Activated CD4-positive, alpha-beta T cell treated with anti-CD3 and anti-CD28 coated beads for 36 hours (primary cell): ENCODE measurements at regions of chr16 and their contacts with region 1.

Region 1: DNA sequence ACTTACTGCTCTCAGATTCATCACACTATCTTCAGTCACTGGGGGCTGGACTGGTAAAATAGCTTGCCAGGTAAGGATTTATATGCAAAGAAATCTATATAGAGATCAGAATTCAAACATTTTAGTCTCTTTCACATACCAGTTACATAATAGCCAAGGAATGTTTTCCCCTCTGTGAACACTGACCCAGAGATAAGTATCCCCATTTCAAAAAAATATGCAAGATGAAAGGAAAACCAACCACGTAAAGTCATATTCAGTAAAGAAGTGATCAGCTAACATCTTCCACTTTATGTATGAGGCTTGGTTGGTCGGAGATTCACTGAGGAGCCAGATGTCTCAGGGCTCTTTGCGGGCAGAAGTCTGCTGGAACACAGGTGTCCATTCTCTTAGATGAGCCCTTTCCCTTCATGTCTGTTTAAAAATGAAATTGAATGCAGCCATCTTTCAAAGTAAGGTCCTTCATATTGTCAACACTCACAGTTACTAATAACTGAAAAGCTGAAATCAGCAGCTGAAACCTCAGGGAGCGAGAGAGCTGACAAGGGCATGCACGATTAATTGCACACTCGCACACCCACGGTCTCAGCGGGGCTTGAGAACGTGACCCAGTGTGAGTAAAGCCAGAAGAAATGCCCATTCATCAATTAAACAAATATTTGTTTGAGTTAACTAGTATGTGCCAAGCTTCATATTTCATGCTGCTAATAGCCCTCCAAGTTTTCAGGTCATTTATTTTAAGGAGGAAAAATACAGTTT is 161.2 kb downstream of the MRTFB start:
- DNase-seq: no peak
- ATAC-seq: no peak
- H3K4me3 Mint-ChIP-seq: no peak overlapping the region
- H3K27ac Mint-ChIP-seq: no peak overlapping the region
- H3K4me1 Mint-ChIP-seq: no peaks in the 10 kb centered on the region
- H3K27me3 Mint-ChIP-seq: no peaks in the 10 kb centered on the region

Region 2: DNA sequence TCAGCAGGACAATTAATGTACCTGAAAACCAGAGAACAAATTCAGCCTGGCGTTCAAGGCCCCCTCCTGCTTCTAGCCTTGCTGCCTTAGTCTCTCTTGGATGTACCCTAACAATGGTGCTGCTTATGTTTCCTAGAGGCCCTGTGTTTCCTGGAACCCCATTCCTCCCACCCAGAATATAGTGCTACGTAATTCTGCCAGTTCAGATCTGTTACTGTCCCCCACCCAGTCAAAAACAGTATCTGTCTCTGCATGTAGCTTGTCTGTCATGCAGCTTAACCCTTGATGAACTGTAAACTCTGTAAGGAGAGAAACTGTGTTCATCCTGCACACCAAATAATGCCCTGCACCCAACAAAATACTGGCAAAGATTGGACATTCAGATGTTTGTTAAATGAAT is 154.4 kb before region 1 on chr16:
- CTCF ChIA-PET with region 1: no interaction called
- POLR2A ChIA-PET with region 1: no interaction called
- intact Hi-C with region 1: no loop called
- DNase-seq: no peak
- ATAC-seq: no peak
- H3K4me3 Mint-ChIP-seq: no peak overlapping the region
- H3K27ac Mint-ChIP-seq: no peak overlapping the region
- H3K4me1 Mint-ChIP-seq: peaks cover 9% of the 10 kb centered on the region
- H3K27me3 Mint-ChIP-seq: no peaks in the 10 kb centered on the region

Region 3: DNA sequence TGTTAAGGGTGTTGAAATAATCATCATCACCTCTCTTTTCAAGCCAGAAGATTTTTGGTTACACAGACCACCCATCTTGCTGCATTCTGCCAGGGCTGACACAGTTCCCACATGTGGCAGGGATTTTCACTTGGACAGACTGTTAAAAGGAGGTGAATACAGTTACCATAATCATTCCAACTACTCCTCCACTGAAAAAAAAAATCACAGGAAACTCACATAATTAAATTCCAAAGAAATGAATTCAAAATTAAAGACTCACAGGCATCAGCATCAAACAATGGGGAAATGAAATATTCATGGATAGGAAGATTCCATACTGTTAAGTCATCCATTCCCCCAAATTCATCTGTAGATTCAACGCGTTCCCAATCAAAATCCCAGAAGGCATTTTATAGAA is 48.3 kb after region 1 on chr16:
- CTCF ChIA-PET with region 1: no interaction called
- POLR2A ChIA-PET with region 1: no interaction called
- intact Hi-C with region 1: no loop called
- DNase-seq: no peak
- ATAC-seq: no peak
- H3K4me3 Mint-ChIP-seq: no peak overlapping the region
- H3K27ac Mint-ChIP-seq: no peak overlapping the region
- H3K4me1 Mint-ChIP-seq: peaks cover 7% of the 10 kb centered on the region
- H3K27me3 Mint-ChIP-seq: peaks cover 2% of the 10 kb centered on the region

Region 4: DNA sequence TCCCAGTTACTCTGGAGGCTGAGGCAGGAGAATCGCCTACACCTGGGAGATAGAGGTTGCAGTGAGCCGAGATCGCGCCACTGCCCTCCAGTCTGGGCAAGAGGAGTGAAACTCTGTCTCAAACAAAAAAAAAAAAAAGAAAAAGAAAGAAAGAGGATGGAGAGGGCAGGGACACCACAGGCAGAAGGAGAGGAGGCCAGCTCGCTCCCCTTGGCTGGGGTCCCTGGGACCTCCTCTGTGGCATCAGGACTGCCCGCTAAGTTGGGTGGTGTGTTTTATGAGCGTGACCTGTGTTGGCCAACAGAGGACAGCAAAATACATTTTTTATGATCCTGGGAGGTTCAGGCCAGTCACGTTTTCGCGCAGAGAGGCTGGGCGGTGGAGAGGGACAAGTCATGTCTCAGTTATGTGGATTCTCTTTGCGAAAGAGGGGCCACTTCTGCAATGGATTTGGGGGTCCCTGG is 68.5 kb after region 1 on chr16:
- CTCF ChIA-PET with region 1: no interaction called
- POLR2A ChIA-PET with region 1: no interaction called
- intact Hi-C with region 1: no loop called
- DNase-seq: peak; percentile 68
- ATAC-seq: peak; percentile 78
- H3K4me3 Mint-ChIP-seq: peak overlapping the region; percentile 63
- H3K27ac Mint-ChIP-seq: no peak overlapping the region
- H3K4me1 Mint-ChIP-seq: peaks cover 8% of the 10 kb centered on the region
- H3K27me3 Mint-ChIP-seq: peaks cover 15% of the 10 kb centered on the region

Region 5: DNA sequence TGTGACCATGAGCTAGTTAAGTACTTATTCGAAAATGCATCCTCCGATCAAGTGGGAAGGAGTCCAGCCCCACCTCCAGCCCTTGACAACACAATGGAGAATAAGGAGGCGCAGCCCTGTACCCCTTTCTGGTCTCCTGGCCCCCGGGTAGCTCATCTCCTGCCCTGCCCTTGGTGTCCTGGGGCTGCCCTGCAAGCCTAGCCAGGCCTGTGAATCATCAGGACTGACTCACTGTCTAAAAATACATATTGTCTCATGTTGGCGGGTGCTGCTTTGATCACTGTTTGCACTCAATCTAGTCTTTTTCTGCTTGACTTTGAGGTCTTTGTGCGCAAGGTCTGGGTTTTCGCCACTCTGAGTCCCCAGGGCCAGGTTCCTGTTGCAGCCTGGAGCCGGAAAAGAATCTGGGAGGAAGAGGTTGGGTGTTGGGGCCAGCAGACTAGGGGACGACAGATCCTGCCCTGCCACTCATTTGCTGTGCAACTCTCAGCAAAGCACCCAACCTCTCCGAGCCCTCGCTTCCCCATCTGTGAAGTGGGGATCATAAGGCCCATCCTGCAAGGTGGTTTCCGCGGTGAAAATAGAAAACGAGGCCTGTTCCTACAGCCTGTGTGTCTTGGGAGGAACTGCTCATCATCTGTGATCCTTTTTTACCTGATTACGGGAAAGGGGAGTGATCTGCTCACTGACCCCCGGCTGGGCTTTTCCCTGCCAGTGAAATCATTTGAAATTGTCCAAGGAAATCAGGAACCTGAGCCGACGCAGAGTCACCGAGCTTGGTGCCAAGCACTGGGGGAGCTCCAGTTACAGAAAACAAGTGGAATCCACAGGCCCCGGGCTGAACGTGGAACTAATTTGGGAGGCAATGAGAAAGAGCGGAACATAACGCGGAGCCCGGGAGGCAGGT is 167.3 kb after region 1 on chr16:
- CTCF ChIA-PET with region 1: no interaction called
- POLR2A ChIA-PET with region 1: no interaction called
- intact Hi-C with region 1: no loop called
- DNase-seq: no peak
- ATAC-seq: peak; percentile 74
- H3K4me3 Mint-ChIP-seq: no peak overlapping the region
- H3K27ac Mint-ChIP-seq: no peak overlapping the region
- H3K4me1 Mint-ChIP-seq: no peaks in the 10 kb centered on the region
- H3K27me3 Mint-ChIP-seq: no peaks in the 10 kb centered on the region

Region 6: GRCh38 chr16:14600164-14600563 is 367.9 kb after region 1 on chr16:
- CTCF ChIA-PET with region 1: interaction called, 10 read pairs
- POLR2A ChIA-PET with region 1: no interaction called
- intact Hi-C with region 1: no loop called
- DNase-seq: no peak
- ATAC-seq: no peak
- H3K4me3 Mint-ChIP-seq: no peak overlapping the region
- H3K27ac Mint-ChIP-seq: no peak overlapping the region
- H3K4me1 Mint-ChIP-seq: no peaks in the 10 kb centered on the region
- H3K27me3 Mint-ChIP-seq: no peaks in the 10 kb centered on the region